Testis (tissue), 5 donors: ENCODE measurements at regions of chr18 and their contacts with region 1.

Region 1: GRCh38 chr18:3595369-3596273 is 145.6 kb downstream of the TGIF1 start:
- DNase-seq: no peak
- H3K4me3 ChIP-seq: peak overlapping the region in 1 of 2 donors; percentile 67
- H3K27ac ChIP-seq: peak overlapping the region; percentile 96
- H3K4me1 ChIP-seq: peaks cover 50% of the 10 kb centered on the region
- H3K27me3 ChIP-seq: no peaks in the 10 kb centered on the region
- CTCF ChIP-seq: no peak
- POLR2A ChIP-seq: no peak

Region 2: DNA sequence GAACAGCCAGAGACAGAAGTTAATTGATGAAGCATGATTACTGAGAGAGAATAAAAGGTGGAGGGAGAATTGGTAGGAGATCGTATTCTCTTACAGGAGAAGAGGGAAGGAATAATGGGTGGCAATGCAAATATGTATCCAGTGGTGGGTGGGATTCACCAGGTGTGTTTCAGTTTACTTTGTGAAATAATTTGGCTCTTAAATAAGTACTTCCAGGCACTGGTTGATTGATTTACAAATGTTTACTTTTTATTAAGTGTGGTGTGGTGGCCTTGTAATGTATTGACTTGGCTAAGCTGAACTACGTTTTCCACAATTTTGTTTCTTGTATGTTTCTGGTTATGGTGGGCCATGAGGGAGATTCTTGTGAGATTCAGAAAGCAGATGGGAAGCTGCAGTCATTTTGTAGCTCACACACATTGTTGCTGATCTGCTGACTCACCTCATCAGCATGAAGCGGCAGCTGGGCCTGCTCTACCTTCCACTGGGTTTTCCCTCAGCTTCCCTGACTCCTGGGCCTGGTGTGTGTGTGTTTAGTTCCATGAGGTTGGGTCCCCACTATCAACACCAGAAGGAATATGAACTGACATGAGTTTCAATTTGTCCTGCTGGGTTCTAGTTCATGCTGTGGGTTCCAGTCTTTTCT is 301.1 kb before region 1 on chr18:
- intact Hi-C with region 1: no loop called
- DNase-seq: no peak
- H3K4me3 ChIP-seq: no peak overlapping the region
- H3K27ac ChIP-seq: no peak overlapping the region
- H3K4me1 ChIP-seq: no peaks in the 10 kb centered on the region
- H3K27me3 ChIP-seq: no peaks in the 10 kb centered on the region
- CTCF ChIP-seq: no peak
- POLR2A ChIP-seq: no peak

Region 3: DNA sequence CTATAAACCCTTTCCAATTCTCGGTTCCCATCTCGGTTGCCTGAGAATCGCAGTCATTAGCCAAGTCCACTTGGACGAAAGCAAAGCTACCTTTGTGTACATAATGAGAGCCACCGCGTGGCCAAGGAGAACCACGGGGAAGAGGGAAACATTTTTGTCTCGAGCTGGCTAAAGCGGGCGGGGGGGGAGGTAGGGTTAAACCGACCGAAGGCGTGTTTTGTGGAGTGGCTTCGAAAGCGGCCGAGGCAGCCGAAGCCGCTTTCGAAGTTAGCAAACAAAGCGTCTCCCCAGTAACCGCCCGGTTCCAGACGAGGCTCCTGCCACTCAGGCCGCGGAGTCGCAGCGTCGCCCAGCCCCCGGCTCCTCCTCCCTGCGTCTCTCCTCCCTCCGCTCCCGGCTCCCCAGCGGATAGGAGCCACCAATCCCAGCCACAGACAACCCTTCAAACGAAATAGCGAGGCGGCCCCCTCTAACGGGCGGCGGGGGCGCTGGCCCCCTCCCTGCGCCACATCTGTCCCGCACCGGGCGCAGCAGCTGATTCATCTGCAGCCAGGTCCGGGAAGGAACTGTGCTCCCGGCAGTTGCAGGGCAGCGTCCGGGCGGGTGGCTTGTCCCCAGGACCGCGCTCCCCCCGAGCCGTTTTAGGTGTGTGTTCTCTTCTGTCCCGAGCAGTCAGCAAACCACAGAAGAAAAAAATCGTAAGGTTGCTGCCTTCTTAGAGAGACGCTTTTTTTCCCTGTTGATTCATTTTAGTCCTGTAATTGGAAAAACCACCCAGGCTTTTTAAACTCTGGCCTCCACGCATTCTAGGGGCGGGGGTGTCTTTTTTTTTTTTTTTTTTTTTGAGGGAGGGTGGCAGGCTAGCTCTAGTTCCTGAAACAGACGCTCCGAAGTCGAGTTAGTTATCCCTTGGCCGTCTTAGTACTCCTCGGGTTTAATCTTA is 147.5 kb before region 1 on chr18:
- intact Hi-C with region 1: loop called (anchors 5 kb)
- DNase-seq: peak; percentile 95
- H3K4me3 ChIP-seq: peak overlapping the region; percentile 80 to 96
- H3K27ac ChIP-seq: peak overlapping the region; percentile 97 to 98
- H3K4me1 ChIP-seq: peaks cover 18% of the 10 kb centered on the region
- H3K27me3 ChIP-seq: no peaks in the 10 kb centered on the region
- CTCF ChIP-seq: peak in 1 of 3 experiments; percentile 5
- POLR2A ChIP-seq: peak; percentile 10

Region 4: DNA sequence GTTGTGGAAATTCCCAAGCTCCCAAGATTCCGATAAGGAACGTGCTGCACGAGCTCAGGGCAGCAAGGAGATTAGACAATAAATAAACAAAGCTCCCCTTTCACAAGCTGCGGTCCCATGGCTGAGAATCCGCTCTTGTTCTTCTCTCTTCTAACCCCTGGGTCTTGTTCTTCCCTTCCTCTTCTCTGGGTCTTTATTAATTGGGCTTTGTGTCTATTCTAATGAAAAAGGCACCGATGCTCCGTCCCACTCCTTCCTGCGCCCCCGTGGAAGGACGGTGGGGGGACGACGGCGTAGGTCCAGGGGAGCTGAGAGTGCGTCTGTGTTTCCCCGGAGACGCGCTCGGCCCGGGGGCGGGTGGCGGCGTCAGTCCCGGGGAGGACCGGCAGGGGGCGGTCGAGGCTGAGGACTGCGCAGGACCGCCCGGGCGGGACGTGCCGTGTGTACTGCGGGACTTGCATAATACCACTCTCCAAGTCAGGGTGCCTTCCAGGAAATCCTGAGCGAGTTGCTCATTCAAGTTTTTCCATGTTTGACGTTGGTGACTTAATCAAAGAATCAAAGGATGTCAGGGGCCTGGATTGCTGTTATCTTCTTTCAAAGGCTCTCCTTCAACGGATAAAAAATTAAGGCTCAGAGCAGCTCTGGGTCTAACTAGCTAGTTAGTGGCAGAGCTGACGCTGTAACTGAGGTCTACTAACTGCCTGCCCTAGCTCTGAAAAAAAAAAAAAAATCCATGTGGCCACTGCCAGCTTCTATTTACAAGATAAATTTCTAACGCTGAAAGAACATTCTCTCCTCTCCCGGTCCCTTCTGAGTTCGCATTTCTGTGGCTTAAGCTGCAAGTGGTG is 175.7 kb after region 1 on chr18:
- intact Hi-C with region 1: no loop called
- DNase-seq: peak; percentile 94
- H3K4me3 ChIP-seq: peak overlapping the region; percentile 3 to 27
- H3K27ac ChIP-seq: peak overlapping the region; percentile 9 to 66
- H3K4me1 ChIP-seq: peaks cover 4% of the 10 kb centered on the region
- H3K27me3 ChIP-seq: no peaks in the 10 kb centered on the region
- CTCF ChIP-seq: peak; percentile 97 to 98 (median 98)
- POLR2A ChIP-seq: no peak